Activated CD8-positive, alpha-beta T cell treated with anti-CD3 and anti-CD28 coated beads for 36 hours (primary cell): ENCODE measurements at regions of chr1 and their contacts with region 1.

Region 1: GRCh38 chr1:167499664-167500101 is 18.6 kb downstream of the CD247 start:
- DNase-seq: peak; percentile 70
- ATAC-seq: peak; percentile 40
- H3K4me3 Mint-ChIP-seq: peak overlapping the region; percentile 29
- H3K27ac Mint-ChIP-seq: peak overlapping the region; percentile 97
- H3K4me1 Mint-ChIP-seq: peaks cover 98% of the 10 kb centered on the region
- H3K27me3 Mint-ChIP-seq: no peaks in the 10 kb centered on the region
- CTCF ChIP-seq: no peak

Region 2: GRCh38 chr1:167442124-167442848 is 57.4 kb before region 1 on chr1:
- CTCF ChIA-PET with region 1: interaction called, 24 read pairs
- POLR2A ChIA-PET with region 1: interaction called, 33 read pairs
- intact Hi-C with region 1: no loop called
- DNase-seq: peak; percentile 93
- ATAC-seq: peak; percentile 73
- H3K4me3 Mint-ChIP-seq: no peak overlapping the region
- H3K27ac Mint-ChIP-seq: peak overlapping the region; percentile 68
- H3K4me1 Mint-ChIP-seq: peaks cover 88% of the 10 kb centered on the region
- H3K27me3 Mint-ChIP-seq: no peaks in the 10 kb centered on the region
- CTCF ChIP-seq: peak; percentile 88

Region 3: DNA sequence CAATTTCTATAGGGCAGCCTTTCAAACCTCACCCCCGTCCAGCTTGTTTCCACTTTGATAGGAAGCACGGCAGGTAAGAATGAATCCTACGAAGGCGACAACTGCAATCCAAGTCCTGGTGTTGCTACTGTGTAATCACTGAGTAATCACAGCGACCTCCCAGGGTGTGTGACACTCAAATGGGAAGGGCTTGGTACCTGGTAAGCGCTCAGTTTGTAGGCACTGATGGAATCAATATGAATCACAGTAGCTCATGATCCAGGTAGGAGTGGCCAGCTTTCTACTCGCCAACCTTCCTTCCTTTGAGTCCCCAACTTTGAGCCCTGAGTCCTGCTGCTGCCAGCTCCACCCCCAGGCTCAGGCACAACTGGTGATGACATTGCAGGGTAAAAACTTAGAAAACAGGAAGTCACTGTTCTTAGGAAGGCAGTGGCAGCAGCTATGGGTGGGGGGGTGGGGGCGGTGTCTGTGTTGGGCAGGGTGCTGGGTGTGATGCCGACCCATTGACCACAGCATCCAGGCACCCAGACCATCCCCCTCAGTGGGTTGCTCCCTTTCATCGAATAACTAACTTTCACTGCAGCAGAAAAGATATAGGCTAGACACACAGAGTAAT is 52.1 kb before region 1 on chr1:
- CTCF ChIA-PET with region 1: interaction called, 24 read pairs
- POLR2A ChIA-PET with region 1: interaction called, 33 read pairs
- intact Hi-C with region 1: loop called (anchors 5 kb)
- DNase-seq: peak; percentile 90
- ATAC-seq: peak; percentile 82
- H3K4me3 Mint-ChIP-seq: peak overlapping the region; percentile 65
- H3K27ac Mint-ChIP-seq: peak overlapping the region; percentile 91
- H3K4me1 Mint-ChIP-seq: peaks cover 82% of the 10 kb centered on the region
- H3K27me3 Mint-ChIP-seq: no peaks in the 10 kb centered on the region
- CTCF ChIP-seq: no peak

Region 4: DNA sequence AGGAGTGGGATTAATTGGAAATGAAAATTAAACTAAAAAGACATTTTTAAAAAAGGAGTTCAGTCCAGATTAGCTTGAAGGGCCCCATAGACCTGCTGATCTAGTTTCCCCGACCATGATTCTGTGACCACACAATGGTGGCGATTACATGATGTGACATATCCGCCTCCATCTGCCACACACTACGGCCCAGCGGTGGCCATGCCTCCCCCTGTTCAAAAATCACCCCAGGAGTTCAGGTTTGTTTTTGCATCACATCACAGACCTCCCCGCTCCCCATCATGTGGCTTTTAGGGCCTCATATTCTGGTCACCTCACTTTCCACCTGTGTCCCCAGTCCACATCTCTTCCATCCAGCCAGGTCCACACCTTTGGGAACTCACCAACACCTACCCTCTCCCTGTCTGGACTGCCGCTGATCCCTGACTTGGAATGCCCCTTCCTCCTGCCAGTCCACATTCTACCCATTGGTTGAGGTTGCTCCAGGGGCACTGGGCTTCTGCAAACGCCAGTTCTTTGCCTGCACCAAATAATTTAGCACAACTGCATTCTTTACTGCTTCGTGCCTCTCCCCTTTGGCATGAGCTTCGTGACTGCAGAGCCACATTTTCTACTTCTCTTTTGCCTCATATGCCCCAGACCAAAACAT is 20.2 kb before region 1 on chr1:
- CTCF ChIA-PET with region 1: interaction called, 6 read pairs
- POLR2A ChIA-PET with region 1: interaction called, 70 read pairs
- intact Hi-C with region 1: no loop called
- DNase-seq: peak; percentile 65
- ATAC-seq: peak; percentile 28
- H3K4me3 Mint-ChIP-seq: peak overlapping the region; percentile 33
- H3K27ac Mint-ChIP-seq: peak overlapping the region; percentile 83
- H3K4me1 Mint-ChIP-seq: peaks cover 93% of the 10 kb centered on the region
- H3K27me3 Mint-ChIP-seq: no peaks in the 10 kb centered on the region
- CTCF ChIP-seq: no peak

Region 5: DNA sequence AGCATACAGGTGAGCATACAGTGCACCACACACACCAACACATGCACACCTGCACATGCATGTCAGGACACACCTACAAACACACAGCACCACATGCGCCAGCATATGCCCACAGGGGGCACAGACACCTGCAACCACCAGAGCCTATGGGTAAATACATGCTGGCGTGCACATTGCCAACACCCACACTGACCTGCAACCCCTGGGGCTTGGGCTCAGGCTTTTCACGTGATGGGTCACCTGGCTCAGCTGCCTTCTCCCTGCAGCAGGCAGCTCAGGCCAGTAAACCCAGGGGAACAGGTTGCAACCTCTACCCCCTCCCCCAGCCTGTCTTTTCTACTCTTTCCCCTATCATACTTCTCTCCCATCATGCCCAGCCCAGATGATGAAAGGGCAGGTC is 10.6 kb after region 1 on chr1:
- CTCF ChIA-PET with region 1: interaction called, 62 read pairs
- POLR2A ChIA-PET with region 1: interaction called, 148 read pairs
- intact Hi-C with region 1: no loop called
- DNase-seq: peak; percentile 33
- ATAC-seq: peak; percentile 25
- H3K4me3 Mint-ChIP-seq: peak overlapping the region; percentile 58
- H3K27ac Mint-ChIP-seq: peak overlapping the region; percentile 76
- H3K4me1 Mint-ChIP-seq: peaks cover 75% of the 10 kb centered on the region
- H3K27me3 Mint-ChIP-seq: no peaks in the 10 kb centered on the region
- CTCF ChIP-seq: no peak

Region 6: DNA sequence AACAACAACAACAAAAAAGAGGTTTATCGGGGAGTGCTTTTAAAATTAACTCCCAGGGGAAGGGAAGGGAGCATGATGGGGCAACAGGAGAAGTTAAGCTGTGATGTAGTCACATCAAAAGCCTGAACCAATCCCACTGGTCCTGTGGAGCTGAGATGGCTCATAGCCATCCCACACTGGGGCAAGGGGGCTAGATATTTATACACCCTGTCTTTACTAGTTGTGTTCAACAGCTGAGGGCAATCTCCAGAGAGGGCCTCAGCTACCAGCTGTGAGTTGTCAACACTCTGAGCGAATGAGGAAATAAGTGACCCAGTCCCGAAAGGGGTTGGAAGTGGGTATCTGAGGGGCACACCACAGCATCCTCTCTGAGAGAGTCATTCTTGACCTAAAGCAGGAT is 84.9 kb after region 1 on chr1:
- CTCF ChIA-PET with region 1: no interaction called
- POLR2A ChIA-PET with region 1: no interaction called
- intact Hi-C with region 1: no loop called
- DNase-seq: no peak
- ATAC-seq: no peak
- H3K4me3 Mint-ChIP-seq: no peak overlapping the region
- H3K27ac Mint-ChIP-seq: no peak overlapping the region
- H3K4me1 Mint-ChIP-seq: no peaks in the 10 kb centered on the region
- H3K27me3 Mint-ChIP-seq: no peaks in the 10 kb centered on the region
- CTCF ChIP-seq: no peak